Sigmoid colon (tissue), 7 donors: ENCODE measurements at regions of chrX and their contacts with region 1.

Region 1: GRCh38 chrX:56978172-56978571 is 17.2 kb downstream of the SPIN3 start:
- DNase-seq: no peak
- H3K4me3 ChIP-seq: no peak overlapping the region
- H3K27ac ChIP-seq: no peak overlapping the region
- H3K4me1 ChIP-seq: no peaks in the 10 kb centered on the region
- H3K27me3 ChIP-seq: no peaks in the 10 kb centered on the region
- CTCF ChIP-seq: peak in 3 of 4 experiments; percentile 18 to 50 (median 37)
- EP300 ChIP-seq: no peak
- POLR2A ChIP-seq: no peak

Region 2: DNA sequence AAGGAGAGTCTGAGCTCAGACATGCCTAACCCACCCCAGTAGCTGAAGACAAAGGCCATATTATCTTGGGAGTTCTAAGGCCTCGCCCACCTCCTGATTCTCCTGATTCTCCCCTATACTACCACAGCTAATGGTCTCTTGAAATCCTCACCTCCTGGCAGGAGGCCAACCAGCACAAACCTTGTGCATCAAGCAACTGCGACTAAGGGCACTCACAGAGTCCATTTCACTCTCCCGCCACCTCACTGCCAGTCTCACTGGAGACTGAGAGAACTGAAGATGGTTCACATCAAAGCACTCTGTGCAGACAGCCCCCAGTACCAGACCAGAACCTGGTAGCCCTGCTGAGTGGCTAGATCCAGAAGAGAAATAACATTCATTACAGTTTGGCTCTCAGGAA is 848.1 kb before region 1 on chrX:
- intact Hi-C with region 1: no loop called
- DNase-seq: no peak
- H3K4me3 ChIP-seq: no peak overlapping the region
- H3K27ac ChIP-seq: no peak overlapping the region
- H3K4me1 ChIP-seq: no peaks in the 10 kb centered on the region
- H3K27me3 ChIP-seq: no peaks in the 10 kb centered on the region
- CTCF ChIP-seq: no peak
- EP300 ChIP-seq: no peak
- POLR2A ChIP-seq: no peak

Region 3: DNA sequence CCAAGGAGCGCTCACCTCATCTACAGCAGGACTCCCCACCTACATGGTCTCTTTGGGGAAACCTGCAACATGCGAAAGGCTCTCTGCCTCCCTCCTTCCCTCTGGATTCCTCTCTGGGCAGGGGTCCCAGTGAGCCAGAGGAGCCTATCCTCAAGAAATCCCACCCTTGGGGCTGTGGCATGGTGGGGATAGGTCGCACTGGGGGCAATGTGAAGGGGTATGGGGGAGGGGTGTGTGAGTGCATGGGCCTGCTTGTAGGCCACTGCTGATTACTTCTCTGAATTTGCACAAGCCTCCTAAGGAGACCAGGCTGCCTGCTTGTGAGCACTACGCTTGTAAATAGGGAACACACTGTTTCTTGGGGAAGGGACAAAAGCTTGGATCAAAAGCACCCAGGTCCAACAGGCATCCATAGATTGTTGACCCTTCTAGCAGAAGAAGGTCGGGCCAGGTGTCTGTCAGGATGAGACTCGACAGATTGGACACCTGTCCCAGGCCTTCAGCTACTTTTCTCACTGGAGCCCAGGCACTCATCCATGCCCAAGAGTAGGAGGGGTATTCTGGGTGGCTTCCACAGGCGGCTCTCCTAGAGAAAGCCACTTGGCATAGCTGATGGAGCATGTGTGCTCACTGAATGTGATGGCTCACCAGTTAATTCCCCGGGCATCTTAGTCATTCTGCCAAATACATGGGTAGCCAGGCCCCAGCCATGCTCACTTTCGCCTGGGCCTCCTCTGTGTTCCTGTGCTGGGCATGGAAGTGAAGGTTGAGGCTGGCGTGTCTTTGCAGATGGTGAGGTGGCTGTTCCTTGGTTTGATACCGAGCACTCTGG is 174.1 kb before region 1 on chrX:
- intact Hi-C with region 1: loop called (anchors 1 kb)
- DNase-seq: no peak
- H3K4me3 ChIP-seq: peak overlapping the region in 1 of 4 donors; percentile 61
- H3K27ac ChIP-seq: peak overlapping the region in 2 of 4 donors; percentile 27 to 83
- H3K4me1 ChIP-seq: peaks cover 0 to 11% (median 2%) of the 10 kb centered on the region in 4 donors
- H3K27me3 ChIP-seq: no peaks in the 10 kb centered on the region
- CTCF ChIP-seq: peak in 1 of 4 experiments; percentile 2
- EP300 ChIP-seq: no peak
- POLR2A ChIP-seq: no peak